ENCODE measurements at regions of chr1 and their contacts with region 1.

Region 1: DNA sequence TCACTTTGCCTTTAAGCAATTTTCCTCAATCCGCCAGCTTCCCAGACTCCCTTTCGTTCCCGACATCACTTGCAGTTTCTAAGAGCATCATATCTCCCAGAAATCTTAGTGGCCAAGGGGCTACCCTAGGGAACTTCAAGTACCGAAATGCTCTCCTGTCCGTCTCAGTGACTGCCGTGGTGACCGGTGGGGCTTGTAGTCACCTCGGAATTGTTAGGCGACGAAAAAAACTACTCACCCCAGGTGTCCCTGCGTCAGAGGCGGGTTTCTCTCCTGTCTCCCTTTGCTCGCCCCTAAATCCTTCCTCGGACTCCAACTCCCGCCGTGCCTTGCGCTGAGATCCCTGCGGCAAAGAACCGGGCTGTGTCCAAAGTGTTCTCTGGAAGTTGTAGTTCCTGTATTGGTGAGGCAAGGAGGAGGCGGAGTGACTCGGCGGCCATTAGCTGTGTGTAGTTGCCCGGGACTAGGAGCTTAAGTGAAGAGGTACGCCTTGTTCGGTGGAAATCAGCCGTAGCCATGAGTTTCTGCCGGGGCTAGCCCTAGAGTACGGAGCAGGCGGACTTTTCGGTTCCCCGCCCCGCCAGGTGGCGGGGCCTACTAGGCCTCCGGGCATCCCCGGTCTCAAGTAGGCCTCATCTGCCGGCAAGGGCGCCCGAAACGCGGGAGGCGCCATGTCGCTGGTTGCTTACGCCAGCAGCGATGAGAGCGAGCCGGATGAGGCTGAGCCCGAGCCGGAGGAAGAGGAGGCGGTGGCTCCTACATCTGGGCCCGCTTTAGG is at the start of gene PRCC:
- DNase-seq: peak; percentile 99
- H3K4me3 ChIP-seq: peak within 1 kb of the TSS; percentile 67 to 99 (median 86)
- H3K27ac ChIP-seq: peak within 1 kb of the TSS; percentile 92 to 96 (median 94)
- H3K4me1 ChIP-seq: peaks cover 0 to 50% (median 47%) of the 10 kb centered on the region in 4 donors
- H3K27me3 ChIP-seq: no peaks in the 10 kb centered on the region
- CTCF ChIP-seq: no peak
- EP300 ChIP-seq: peak in 1 of 4 donors; percentile 60
- POLR2A ChIP-seq: peak in 1 of 2 donors; percentile 19
- total RNA-seq, gene PRCC: 27.5 to 34.1 (median 32.4) TPM

Region 2: DNA sequence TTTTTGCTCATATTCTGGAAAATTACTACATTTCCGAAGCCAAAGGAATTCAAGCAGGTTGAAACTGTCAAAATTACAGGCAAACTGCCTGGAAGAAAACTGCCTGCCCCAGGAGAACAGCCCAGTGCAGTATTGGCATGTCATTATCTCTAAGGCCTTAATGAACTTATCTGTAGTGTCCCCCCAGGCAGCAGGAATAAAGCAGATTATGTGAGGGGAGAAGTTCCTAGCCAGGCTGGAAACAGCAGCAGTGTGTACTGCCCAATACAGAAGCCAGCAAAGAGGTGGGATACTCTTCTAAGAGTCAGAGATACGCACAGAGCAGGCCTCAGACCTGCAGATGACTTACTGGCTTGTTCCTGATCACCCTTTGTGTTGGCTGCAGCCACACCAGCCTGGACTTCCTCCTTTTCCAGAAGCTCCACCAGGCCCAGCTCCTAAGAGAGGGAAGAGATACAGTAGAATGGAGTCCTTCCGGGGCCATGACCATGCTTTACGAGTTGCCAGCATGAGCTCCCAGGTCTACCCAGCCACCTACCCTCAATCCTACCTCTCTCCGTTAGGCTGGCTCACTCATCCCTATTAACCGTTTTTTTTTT is 206.6 kb before region 1 on chr1:
- intact Hi-C with region 1: no loop called
- DNase-seq: peak; percentile 65
- H3K4me3 ChIP-seq: no peak overlapping the region
- H3K27ac ChIP-seq: peak overlapping the region in 2 of 4 donors; percentile 37 to 39
- H3K4me1 ChIP-seq: no peaks in the 10 kb centered on the region
- H3K27me3 ChIP-seq: no peaks in the 10 kb centered on the region
- CTCF ChIP-seq: no peak
- EP300 ChIP-seq: no peak
- POLR2A ChIP-seq: no peak

Region 3: DNA sequence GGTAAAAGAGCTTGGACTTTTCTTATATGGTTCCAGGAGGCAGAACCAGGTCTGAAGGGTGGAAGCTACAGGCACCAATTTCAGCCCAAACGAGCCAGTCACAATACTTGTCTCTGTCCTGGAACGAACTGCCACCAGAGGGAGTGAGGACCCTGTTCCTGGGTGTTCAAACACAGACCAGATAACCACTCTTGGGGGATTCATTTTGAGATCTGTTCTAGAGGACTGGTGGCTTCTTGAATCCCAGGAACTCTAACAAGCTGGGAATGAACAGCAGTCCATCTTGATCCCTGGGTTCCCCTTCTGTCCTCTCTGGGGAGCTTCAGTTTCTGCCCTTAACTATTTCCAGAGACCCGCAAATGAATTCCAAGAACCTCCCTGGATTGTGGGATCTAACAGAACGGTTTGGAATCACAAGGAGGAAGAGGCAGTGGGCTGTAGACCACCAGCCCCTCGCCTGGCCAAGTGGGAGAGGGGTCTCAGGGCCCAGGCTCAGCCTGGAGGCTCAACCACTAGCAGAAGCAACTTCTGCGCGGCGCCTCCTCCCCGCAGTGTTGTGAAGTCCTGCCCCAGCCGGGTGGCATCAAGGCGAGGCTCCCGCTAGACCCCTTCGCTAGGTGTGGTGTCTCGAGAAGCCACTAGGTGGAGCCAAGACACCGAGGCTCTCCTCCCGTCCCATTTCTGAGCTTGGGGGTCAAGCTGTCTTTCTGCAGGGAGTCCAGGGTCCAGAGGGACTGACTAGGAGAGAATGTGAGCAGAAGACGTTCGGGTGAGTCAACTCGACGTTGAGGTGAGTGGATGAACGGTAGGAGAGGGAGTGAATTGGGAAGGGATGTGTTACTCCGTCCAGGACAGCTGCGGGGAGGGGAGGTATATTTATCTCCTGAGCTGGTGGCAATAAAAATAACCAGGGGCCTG is 78.0 kb before region 1 on chr1:
- intact Hi-C with region 1: no loop called
- DNase-seq: peak; percentile 91
- H3K4me3 ChIP-seq: peak overlapping the region in 2 of 4 donors; percentile 0 to 4
- H3K27ac ChIP-seq: peak overlapping the region in 1 of 4 donors; percentile 1
- H3K4me1 ChIP-seq: peaks cover 0 to 26% (median 13%) of the 10 kb centered on the region in 4 donors
- H3K27me3 ChIP-seq: peaks cover 4 to 56% (median 18%) of the 10 kb centered on the region in 3 donors
- CTCF ChIP-seq: peak; percentile 89 to 95 (median 92)
- EP300 ChIP-seq: no peak
- POLR2A ChIP-seq: no peak

Region 4: DNA sequence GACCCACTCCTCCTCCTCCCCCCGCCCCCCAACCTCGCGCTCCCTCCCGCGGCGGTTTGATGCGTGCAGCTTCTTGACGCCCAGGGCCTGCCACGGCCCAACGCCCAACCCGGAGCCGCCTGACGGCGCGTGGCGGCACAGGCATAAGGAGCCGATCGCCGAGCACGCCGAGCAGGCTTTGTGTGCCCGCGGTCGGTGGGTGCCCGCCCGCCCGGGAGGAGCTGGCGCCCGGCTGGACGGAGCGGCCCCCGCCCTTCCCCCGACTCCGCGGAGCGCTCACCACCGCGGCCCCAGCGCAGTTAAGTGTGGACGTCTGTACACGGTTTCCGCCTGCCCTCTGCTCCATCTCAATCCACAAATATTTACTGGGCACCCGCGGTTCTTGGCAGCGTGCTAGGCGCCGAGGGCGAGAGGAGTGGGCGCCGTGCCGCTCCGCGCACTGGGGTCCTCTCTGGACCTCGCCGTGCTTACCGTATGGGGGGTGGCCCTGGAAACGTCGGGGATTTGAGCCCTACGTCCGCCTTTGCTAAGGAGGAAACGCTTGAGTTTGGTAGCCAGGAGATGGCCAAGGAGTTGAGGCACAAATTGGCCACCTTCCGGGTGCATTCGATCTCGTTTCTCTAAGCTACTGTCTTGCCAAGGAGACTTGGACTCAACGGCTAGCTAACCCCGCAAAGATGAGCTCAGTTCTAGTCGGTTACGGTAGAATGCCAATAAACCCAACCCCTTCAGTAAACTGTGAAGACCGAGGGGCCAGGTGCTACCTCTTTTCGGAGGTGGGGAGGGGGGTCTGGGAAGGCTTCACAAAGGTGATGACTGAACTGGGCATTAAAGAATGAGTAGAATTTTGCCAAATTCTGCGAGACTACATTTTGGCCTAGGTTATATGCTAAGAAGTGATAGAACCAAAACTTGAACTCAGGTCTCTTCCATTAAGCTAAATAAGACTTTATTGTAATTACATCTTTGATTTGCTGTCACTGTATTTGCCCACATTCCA is 15.2 kb before region 1 on chr1:
- intact Hi-C with region 1: loop called (anchors 2 kb)
- DNase-seq: peak; percentile 99
- H3K4me3 ChIP-seq: peak overlapping the region; percentile 98 to 100 (median 99)
- H3K27ac ChIP-seq: peak overlapping the region; percentile 96 to 100 (median 98)
- H3K4me1 ChIP-seq: peaks cover 0 to 49% (median 43%) of the 10 kb centered on the region in 4 donors
- H3K27me3 ChIP-seq: no peaks in the 10 kb centered on the region
- CTCF ChIP-seq: no peak
- EP300 ChIP-seq: peak in 1 of 4 donors; percentile 81
- POLR2A ChIP-seq: peak; percentile 27 to 37

Region 5: GRCh38 chr1:156833603-156834002 is 66.3 kb after region 1 on chr1:
- intact Hi-C with region 1: loop called (anchors 2 kb)
- DNase-seq: no peak
- H3K4me3 ChIP-seq: no peak overlapping the region
- H3K27ac ChIP-seq: no peak overlapping the region
- H3K4me1 ChIP-seq: no peaks in the 10 kb centered on the region
- H3K27me3 ChIP-seq: peaks cover 0 to 22% (median 0%) of the 10 kb centered on the region in 3 donors
- CTCF ChIP-seq: no peak
- EP300 ChIP-seq: no peak
- POLR2A ChIP-seq: no peak

Measured in sigmoid colon (tissue), 7 donors.